Astrocyte of the cerebellum (primary cell): ENCODE measurements at regions of chr16 and their contacts with region 1.

Region 1: GRCh38 chr16:19890901-19891300 is 6.3 kb upstream of the GPRC5B start:
- DNase-seq: no peak
- H3K4me3 ChIP-seq: no peak overlapping the region
- CTCF ChIP-seq: no peak

Region 2: DNA sequence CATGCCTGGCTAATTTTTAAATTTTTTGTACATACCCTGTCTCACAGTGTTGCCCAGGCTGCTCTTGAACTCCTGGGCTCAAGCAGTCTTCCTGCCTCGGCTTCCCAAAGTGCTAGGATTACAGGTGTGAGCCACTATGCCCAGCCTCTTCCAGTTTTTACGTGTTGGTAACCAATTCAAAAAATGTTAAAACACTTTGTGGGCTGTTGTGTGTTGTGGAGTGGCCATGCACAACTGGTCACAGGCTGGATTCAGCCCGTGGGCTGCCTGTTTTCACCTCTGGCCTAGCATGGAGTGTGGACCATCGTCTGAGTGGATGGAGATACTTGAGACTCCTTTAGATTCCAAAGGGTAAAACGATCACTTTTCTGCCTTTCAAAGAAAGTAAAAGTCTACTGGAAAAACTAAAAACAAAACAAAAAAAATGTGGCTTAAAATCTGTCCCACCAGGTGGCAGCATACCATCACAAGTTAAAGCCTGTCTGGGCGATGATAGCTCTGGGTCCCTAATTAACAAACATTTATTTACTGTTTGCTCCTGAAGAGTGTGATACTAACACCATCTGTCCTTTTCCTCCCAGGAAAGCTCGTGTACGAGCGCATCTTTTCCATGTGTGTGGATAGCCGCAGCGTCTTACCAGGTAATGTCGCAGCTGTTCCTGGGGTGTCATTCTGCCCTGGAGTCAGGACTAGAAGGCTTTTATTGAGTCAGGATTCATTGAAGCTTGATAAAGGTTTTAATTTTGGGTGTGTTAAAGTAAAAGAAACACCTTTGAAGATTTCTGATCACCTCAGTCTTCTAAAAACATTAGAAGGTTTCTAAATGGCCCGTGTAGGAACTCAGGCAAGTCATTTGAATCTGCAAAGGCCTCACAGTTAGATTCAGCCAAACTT is 289.6 kb before region 1 on chr16:
- in situ Hi-C with region 1: loop called (anchors 5 kb)
- DNase-seq: peak; percentile 23
- H3K4me3 ChIP-seq: no peak overlapping the region
- CTCF ChIP-seq: peak; percentile 60

Region 3: DNA sequence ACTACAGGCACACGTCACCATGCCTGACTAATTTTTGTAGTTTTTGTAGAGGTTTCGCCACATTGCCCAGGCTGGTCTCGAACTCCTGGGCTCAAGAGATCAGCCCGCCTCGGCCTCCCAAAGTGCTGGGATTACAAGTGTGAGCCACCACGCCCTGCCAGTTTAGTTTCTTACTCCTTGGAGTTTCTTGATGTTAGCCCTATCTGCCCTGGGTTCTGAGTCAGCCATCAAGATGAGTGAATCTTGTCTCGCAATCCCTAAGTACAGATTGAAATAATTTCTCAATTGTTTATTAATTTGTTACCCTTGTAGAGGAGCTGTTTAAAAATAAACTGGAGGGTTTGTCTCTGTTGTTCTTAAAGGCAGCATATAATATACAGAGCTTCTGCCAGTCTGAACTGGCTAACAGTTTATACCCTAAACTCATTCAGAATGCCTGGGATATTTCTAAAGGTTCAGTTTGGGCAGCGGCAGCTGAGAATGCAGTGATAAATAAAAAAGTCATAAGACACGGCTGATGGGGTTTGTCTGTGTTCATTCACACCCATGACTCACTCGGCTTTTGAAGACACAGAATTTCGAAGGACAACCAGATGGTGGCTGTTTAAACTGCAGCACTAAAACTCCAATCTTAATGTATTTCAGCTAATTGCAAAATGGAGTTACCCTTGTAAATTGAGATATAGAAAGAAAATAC is 45.8 kb before region 1 on chr16:
- in situ Hi-C with region 1: no loop called
- DNase-seq: peak; percentile 59
- H3K4me3 ChIP-seq: no peak overlapping the region
- CTCF ChIP-seq: no peak

Region 4: GRCh38 chr16:20510323-20510722 is 619.4 kb after region 1 on chr16:
- in situ Hi-C with region 1: no loop called
- DNase-seq: no peak
- H3K4me3 ChIP-seq: no peak overlapping the region
- CTCF ChIP-seq: no peak